CD4-positive, alpha-beta T cell (primary cell): ENCODE measurements at regions of chr18 and their contacts with region 1.

Region 1: GRCh38 chr18:77132371-77133050 is at the start of gene MBP:
- DNase-seq: peak; percentile 57 to 84 (median 76)
- ATAC-seq: peak; percentile 64
- H3K4me3 ChIP-seq: peak within 1 kb of the TSS; percentile 93
- H3K4me3 Mint-ChIP-seq: peak within 1 kb of the TSS; percentile 98
- H3K27ac ChIP-seq: peak within 1 kb of the TSS; percentile 77 to 78
- H3K27ac Mint-ChIP-seq: peak within 1 kb of the TSS; percentile 83
- H3K4me1 ChIP-seq: peaks cover 44% of the 10 kb centered on the region
- H3K4me1 Mint-ChIP-seq: peaks cover 56% of the 10 kb centered on the region
- H3K27me3 ChIP-seq: no peaks in the 10 kb centered on the region
- H3K27me3 Mint-ChIP-seq: no peaks in the 10 kb centered on the region
- CTCF ChIP-seq: no peak
- total RNA-seq, gene MBP: 75.4 to 79.2 TPM

Region 2: GRCh38 chr18:76822510-76823160 is 309.9 kb before region 1 on chr18 and contains the start of gene ZNF236:
- CTCF ChIA-PET with region 1: no interaction called
- POLR2A ChIA-PET with region 1: interaction called, 4 read pairs
- intact Hi-C with region 1: loop called in 1 of 2 experiments (anchors 5 kb)
- DNase-seq: peak; percentile 39 to 88 (median 62)
- ATAC-seq: peak; percentile 43
- H3K4me3 ChIP-seq: peak within 1 kb of the TSS; percentile 97
- H3K4me3 Mint-ChIP-seq: peak within 1 kb of the TSS; percentile 96
- H3K27ac ChIP-seq: peak within 1 kb of the TSS; percentile 90 to 91
- H3K27ac Mint-ChIP-seq: peak within 1 kb of the TSS; percentile 96
- H3K4me1 ChIP-seq: peaks cover 47% of the 10 kb centered on the region
- H3K4me1 Mint-ChIP-seq: peaks cover 62% of the 10 kb centered on the region
- H3K27me3 ChIP-seq: no peaks in the 10 kb centered on the region
- H3K27me3 Mint-ChIP-seq: no peaks in the 10 kb centered on the region
- CTCF ChIP-seq: no peak
- total RNA-seq, gene ZNF236: 25.7 to 27.9 TPM

Region 3: DNA sequence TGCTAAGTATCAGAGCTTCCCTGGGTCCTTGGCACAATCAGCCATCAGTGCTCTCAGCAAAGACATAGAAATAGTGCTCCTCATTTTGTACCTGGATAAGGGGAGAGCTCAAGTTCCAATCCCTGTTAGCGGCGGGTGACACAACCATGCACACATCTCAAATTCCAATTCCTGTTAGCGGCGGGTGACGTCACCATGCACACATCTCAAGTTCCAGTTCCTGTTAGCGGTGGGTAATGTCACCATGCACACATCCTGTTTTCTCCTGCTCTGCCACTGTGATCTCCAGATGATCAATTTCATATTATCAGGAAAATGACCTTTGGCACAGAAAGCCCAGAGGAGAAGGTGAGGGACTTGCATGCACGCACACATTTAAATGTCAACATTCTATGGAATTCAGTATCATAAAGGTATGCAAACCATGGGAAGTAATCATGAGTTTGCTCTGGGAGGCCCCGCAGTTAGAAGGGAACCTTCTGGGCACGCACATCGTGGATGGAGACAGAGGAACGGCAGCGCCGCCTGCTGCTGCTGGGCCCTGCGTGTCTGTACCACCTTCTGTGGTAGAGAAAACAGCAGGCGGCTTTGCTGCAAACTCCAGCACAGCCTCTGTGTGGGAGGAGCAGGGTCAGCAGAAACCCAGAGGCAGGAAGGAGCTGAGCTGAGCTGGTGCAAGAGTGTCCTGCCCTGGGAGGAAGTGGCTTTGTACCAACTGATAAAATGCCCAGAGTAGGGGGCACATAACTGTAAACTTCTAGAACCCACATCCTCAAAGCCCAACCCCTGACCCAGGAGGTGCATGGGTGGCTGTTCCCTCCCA is 77.7 kb before region 1 on chr18:
- CTCF ChIA-PET with region 1: no interaction called
- POLR2A ChIA-PET with region 1: interaction called, 16 read pairs
- intact Hi-C with region 1: no loop called
- DNase-seq: peak; percentile 64 to 93 (median 78)
- ATAC-seq: peak; percentile 79
- H3K4me3 ChIP-seq: peak overlapping the region; percentile 47
- H3K4me3 Mint-ChIP-seq: peak overlapping the region; percentile 61
- H3K27ac ChIP-seq: peak overlapping the region; percentile 90 to 92
- H3K27ac Mint-ChIP-seq: peak overlapping the region; percentile 89
- H3K4me1 ChIP-seq: peaks cover 81% of the 10 kb centered on the region
- H3K4me1 Mint-ChIP-seq: peaks cover 69% of the 10 kb centered on the region
- H3K27me3 ChIP-seq: no peaks in the 10 kb centered on the region
- H3K27me3 Mint-ChIP-seq: no peaks in the 10 kb centered on the region
- CTCF ChIP-seq: peak; percentile 79

Region 4: DNA sequence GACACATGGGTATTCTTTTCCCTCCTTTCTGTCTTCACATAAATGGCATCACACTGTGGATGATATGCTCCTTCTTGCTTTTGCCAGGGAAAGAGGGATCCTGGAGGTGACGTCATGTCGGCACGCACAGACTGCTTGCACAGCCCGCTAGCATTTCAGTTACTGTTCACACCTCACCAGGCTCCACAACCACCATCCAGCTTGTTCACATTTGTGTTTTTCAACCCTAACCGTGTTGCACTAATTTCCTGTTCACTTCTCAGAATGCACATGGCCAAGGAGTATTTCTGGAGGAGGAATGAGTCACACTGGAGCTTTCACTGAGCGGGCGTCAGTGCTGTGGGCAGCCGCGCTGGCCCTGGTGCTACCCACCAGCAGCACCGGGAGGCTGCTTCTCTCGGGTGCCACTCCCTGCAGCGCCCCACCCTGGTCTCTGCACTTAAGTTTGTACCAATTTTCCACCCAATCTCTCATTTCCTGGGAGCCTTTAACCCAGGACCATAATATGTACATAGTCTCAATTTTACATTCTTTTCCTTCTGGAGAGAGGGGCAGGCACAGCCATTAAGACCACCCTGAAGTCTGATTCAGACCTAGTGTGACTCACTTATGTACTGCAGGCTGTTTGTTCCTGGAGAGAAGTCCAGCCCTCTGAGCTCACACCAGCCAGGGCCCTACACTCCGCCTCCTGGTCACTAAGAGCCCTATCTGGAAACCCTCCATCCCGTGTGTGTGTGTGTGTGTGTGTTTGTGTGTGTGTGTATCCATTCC is 65.0 kb before region 1 on chr18:
- CTCF ChIA-PET with region 1: interaction called, 6 read pairs
- POLR2A ChIA-PET with region 1: interaction called, 41 read pairs
- intact Hi-C with region 1: loop called (anchors 2 to 5 kb)
- DNase-seq: peak in 12 of 14 experiments; percentile 52 to 87 (median 62)
- ATAC-seq: peak; percentile 18
- H3K4me3 ChIP-seq: peak overlapping the region; percentile 1
- H3K4me3 Mint-ChIP-seq: peak overlapping the region; percentile 84
- H3K27ac ChIP-seq: peak overlapping the region; percentile 56 to 81
- H3K27ac Mint-ChIP-seq: peak overlapping the region; percentile 98
- H3K4me1 ChIP-seq: peaks cover 96% of the 10 kb centered on the region
- H3K4me1 Mint-ChIP-seq: peaks cover 100% of the 10 kb centered on the region
- H3K27me3 ChIP-seq: no peaks in the 10 kb centered on the region
- H3K27me3 Mint-ChIP-seq: no peaks in the 10 kb centered on the region
- CTCF ChIP-seq: no peak

Region 5: GRCh38 chr18:77088963-77089722 is 43.4 kb before region 1 on chr18:
- CTCF ChIA-PET with region 1: no interaction called
- POLR2A ChIA-PET with region 1: no interaction called
- intact Hi-C with region 1: no loop called
- DNase-seq: no peak
- ATAC-seq: no peak
- H3K4me3 ChIP-seq: no peak overlapping the region
- H3K4me3 Mint-ChIP-seq: no peak overlapping the region
- H3K27ac ChIP-seq: no peak overlapping the region
- H3K27ac Mint-ChIP-seq: peak overlapping the region; percentile 56
- H3K4me1 ChIP-seq: peaks cover 70% of the 10 kb centered on the region
- H3K4me1 Mint-ChIP-seq: peaks cover 68% of the 10 kb centered on the region
- H3K27me3 ChIP-seq: no peaks in the 10 kb centered on the region
- H3K27me3 Mint-ChIP-seq: no peaks in the 10 kb centered on the region
- CTCF ChIP-seq: no peak

Region 6: DNA sequence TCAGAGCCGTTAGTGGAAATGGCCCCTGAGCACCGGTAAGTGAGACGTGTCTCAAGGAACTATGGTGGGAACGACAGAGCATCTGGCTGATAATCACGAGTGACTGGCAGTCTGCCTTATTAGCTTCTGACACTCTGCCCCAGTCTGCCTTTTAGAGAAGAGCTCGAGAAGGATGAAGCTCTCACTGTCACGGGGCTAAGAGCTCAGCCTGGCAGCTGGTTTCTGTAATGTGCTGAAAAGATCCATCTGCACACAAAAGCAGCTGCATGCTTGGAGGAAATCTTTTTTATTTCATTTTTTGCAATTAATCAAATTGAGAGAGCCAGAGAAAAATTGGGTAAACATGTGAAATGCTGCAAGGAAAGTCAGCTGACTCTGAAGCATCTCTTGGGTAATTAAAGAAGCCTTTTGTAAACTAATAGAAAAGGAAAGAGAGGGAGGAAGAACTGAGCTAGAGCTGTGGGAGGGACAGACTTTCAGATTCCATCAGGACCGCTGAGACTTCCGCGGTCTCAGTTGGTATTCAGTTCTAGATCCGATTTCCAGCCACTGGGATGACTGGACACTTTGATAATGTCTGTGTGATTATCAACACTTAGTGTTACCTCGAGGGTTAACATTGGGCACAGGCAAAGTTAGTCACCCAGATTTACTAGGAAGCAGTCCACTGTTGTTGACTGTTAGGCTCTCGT is 24.4 kb before region 1 on chr18:
- CTCF ChIA-PET with region 1: no interaction called
- POLR2A ChIA-PET with region 1: interaction called, 42 read pairs
- intact Hi-C with region 1: loop called in 1 of 2 experiments (anchors 1 kb)
- DNase-seq: peak in 4 of 14 experiments; percentile 26 to 68 (median 52)
- ATAC-seq: peak; percentile 28
- H3K4me3 ChIP-seq: peak overlapping the region; percentile 1
- H3K4me3 Mint-ChIP-seq: peak overlapping the region; percentile 80
- H3K27ac ChIP-seq: peak overlapping the region; percentile 56 to 76
- H3K27ac Mint-ChIP-seq: peak overlapping the region; percentile 97
- H3K4me1 ChIP-seq: peaks cover 93% of the 10 kb centered on the region
- H3K4me1 Mint-ChIP-seq: peaks cover 92% of the 10 kb centered on the region
- H3K27me3 ChIP-seq: no peaks in the 10 kb centered on the region
- H3K27me3 Mint-ChIP-seq: no peaks in the 10 kb centered on the region
- CTCF ChIP-seq: no peak

Region 7: DNA sequence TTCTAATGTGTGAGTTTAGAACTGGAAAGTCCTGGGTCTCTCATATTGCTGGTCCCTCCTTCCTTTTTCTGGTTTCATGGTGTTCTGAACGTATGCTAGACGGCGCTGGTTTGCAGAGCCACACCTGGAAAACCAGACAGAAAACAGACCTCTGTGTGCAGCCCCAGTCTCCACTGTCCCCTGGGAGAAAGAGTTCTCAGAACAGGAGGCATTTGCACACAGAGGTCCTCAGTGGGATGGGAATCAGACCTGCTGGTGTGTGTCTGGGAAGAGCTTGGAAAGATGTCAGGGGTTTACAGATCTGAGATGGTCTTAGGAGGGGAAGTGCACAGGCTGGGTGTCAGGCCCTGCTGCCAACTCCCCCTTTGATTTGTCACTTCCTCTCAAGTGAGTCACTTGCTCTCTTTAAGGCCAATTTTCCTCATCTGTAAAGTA is 14.9 kb after region 1 on chr18:
- CTCF ChIA-PET with region 1: interaction called, 3 read pairs
- POLR2A ChIA-PET with region 1: interaction called, 13 read pairs
- intact Hi-C with region 1: no loop called
- DNase-seq: peak in 5 of 14 experiments; percentile 19 to 59 (median 52)
- ATAC-seq: peak; percentile 72
- H3K4me3 ChIP-seq: no peak overlapping the region
- H3K4me3 Mint-ChIP-seq: peak overlapping the region; percentile 3
- H3K27ac ChIP-seq: no peak overlapping the region
- H3K27ac Mint-ChIP-seq: peak overlapping the region; percentile 84
- H3K4me1 ChIP-seq: peaks cover 21% of the 10 kb centered on the region
- H3K4me1 Mint-ChIP-seq: peaks cover 36% of the 10 kb centered on the region
- H3K27me3 ChIP-seq: no peaks in the 10 kb centered on the region
- H3K27me3 Mint-ChIP-seq: no peaks in the 10 kb centered on the region
- CTCF ChIP-seq: no peak